Endothelial cell of umbilical vein (primary cell): ENCODE measurements at regions of chr1 and their contacts with region 1.

Region 1: DNA sequence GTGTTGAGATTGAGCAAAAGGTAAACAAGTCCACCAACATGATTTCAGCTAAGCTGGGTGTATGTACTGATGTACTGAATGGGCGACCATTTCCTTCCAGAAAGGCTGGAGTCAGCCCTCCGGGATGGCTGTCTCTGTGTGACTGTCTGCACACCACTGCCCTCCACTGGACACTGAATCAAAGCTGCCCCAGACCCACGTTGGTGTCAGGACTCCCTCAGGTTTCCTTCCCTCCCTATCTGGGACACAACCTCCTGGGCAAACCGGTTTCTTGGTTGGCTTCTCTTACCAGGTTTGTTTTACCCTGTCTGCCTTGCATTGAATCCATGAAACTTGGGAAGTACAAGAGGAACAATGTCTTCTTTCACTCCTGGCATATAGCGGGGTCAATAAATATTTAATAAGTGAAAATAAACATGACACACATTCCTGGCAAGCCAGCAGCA is 5.3 kb upstream of the SRP9 start:
- DNase-seq: peak; percentile 87
- H3K4me3 ChIP-seq: no peak overlapping the region
- H3K27ac ChIP-seq: no peak overlapping the region
- H3K4me1 ChIP-seq: peaks cover 19% of the 10 kb centered on the region
- H3K27me3 ChIP-seq: no peaks in the 10 kb centered on the region
- CTCF ChIP-seq: peak; percentile 88 to 90
- POLR2A ChIP-seq: no peak

Region 2: GRCh38 chr1:225131869-225132268 is 640.5 kb before region 1 on chr1:
- CTCF ChIA-PET with region 1: no interaction called
- POLR2A ChIA-PET with region 1: no interaction called
- dilution Hi-C with region 1: no loop called
- intact Hi-C with region 1: no loop called
- DNase-seq: no peak
- H3K4me3 ChIP-seq: no peak overlapping the region
- H3K27ac ChIP-seq: no peak overlapping the region
- H3K4me1 ChIP-seq: no peaks in the 10 kb centered on the region
- H3K27me3 ChIP-seq: no peaks in the 10 kb centered on the region
- CTCF ChIP-seq: no peak
- POLR2A ChIP-seq: no peak

Region 3: DNA sequence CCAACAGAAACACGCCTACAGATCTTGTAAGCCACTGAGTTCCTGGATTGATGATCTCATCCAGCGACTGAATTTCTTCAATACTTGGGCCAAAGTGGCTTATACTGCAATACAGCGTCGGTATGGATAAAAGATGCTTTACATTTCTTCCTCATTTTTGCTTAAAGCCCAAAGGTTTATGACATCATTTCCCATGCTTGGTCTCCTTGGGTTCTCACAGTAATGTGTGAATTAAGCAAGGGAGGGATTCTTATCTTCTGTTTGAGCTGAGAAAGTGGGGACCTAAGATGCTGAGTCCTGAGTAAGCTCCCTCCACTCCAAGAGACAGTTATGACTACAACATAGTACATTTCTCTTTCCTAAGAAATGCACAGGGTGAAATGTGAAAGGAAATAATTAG is 384.0 kb before region 1 on chr1:
- CTCF ChIA-PET with region 1: no interaction called
- POLR2A ChIA-PET with region 1: no interaction called
- dilution Hi-C with region 1: no loop called
- intact Hi-C with region 1: no loop called
- DNase-seq: no peak
- H3K4me3 ChIP-seq: no peak overlapping the region
- H3K27ac ChIP-seq: no peak overlapping the region
- H3K4me1 ChIP-seq: no peaks in the 10 kb centered on the region
- H3K27me3 ChIP-seq: no peaks in the 10 kb centered on the region
- CTCF ChIP-seq: no peak
- POLR2A ChIP-seq: no peak

Region 4: DNA sequence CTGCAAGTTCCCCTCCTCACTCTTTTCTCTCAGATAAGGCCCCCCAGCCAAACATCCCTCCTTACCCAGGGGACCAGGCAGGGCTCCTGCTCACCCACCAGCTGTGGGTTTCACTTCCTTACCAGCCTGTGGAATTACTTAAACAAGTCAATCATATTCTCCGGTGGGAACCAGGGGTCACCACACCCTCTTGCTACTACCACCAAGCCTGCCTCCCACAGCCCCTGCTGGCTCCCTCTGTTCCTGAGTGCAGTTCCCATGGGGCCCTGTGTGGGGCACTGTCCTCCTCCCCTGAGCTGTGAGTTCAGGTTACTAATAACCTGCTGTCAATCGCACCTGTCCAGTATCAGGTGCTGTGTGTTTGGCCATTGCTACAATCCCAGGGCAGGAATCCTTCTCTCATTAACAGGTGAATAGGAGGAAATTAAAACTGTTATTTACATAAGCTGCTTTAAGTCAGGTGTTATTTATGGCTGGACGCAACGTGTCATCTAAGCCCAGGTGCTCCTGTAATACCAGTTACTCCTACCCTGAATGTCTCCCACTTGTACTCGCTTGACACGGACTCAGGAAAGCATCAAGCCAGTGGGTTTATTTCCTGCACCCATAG is 291.4 kb before region 1 on chr1:
- CTCF ChIA-PET with region 1: interaction called, 81 read pairs
- POLR2A ChIA-PET with region 1: interaction called, 3 read pairs
- dilution Hi-C with region 1: no loop called
- intact Hi-C with region 1: loop called (anchors 1 kb)
- DNase-seq: peak; percentile 54
- H3K4me3 ChIP-seq: no peak overlapping the region
- H3K27ac ChIP-seq: no peak overlapping the region
- H3K4me1 ChIP-seq: no peaks in the 10 kb centered on the region
- H3K27me3 ChIP-seq: no peaks in the 10 kb centered on the region
- CTCF ChIP-seq: peak; percentile 86
- POLR2A ChIP-seq: no peak

Region 5: DNA sequence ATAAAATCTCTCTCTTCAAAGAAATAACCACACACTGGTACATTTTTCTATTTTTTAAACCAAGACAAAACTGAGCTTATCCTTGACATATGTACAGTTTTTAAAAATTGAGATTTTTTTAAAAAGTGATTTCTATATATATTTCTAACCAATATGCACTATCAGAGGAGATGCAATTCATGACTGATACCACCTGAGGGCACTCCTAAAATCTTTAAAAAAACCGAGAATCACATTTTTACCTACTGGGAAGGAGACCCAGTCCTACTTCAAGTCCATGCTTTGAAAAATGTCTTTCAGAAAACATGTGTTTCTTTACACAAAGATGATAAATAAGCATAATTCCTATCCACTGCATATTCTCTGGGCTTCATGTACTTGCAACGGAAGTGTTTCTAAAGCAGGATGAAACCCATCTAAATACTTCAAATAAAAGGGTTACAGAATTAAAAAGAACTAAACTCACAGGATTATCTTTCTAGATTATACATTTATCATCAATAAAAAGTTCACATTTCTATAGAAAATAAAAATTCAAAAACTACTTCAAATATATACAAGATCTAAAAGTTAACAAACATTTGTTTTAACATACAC is 218.0 kb before region 1 on chr1:
- CTCF ChIA-PET with region 1: interaction called, 38 read pairs
- POLR2A ChIA-PET with region 1: interaction called, 3 read pairs
- dilution Hi-C with region 1: no loop called
- intact Hi-C with region 1: loop called (anchors 1 kb)
- DNase-seq: peak; percentile 57
- H3K4me3 ChIP-seq: no peak overlapping the region
- H3K27ac ChIP-seq: no peak overlapping the region
- H3K4me1 ChIP-seq: no peaks in the 10 kb centered on the region
- H3K27me3 ChIP-seq: no peaks in the 10 kb centered on the region
- CTCF ChIP-seq: peak; percentile 30 to 32
- POLR2A ChIP-seq: no peak

Region 6: GRCh38 chr1:225631021-225631663 is 141.2 kb before region 1 on chr1:
- CTCF ChIA-PET with region 1: interaction called, 12 read pairs
- POLR2A ChIA-PET with region 1: no interaction called
- dilution Hi-C with region 1: no loop called
- intact Hi-C with region 1: no loop called
- DNase-seq: no peak
- H3K4me3 ChIP-seq: no peak overlapping the region
- H3K27ac ChIP-seq: no peak overlapping the region
- H3K4me1 ChIP-seq: no peaks in the 10 kb centered on the region
- H3K27me3 ChIP-seq: no peaks in the 10 kb centered on the region
- CTCF ChIP-seq: no peak
- POLR2A ChIP-seq: no peak

Region 7: GRCh38 chr1:225746361-225747179 is 25.8 kb before region 1 on chr1:
- CTCF ChIA-PET with region 1: interaction called, 18 read pairs
- POLR2A ChIA-PET with region 1: interaction called, 3 read pairs
- dilution Hi-C with region 1: no loop called
- intact Hi-C with region 1: no loop called
- DNase-seq: peak; percentile 87
- H3K4me3 ChIP-seq: peak overlapping the region; percentile 34 to 70 (median 60)
- H3K27ac ChIP-seq: peak overlapping the region; percentile 74
- H3K4me1 ChIP-seq: peaks cover 7% of the 10 kb centered on the region
- H3K27me3 ChIP-seq: no peaks in the 10 kb centered on the region
- CTCF ChIP-seq: peak in 1 of 2 donors; percentile 22
- POLR2A ChIP-seq: peak; percentile 45

Region 8: DNA sequence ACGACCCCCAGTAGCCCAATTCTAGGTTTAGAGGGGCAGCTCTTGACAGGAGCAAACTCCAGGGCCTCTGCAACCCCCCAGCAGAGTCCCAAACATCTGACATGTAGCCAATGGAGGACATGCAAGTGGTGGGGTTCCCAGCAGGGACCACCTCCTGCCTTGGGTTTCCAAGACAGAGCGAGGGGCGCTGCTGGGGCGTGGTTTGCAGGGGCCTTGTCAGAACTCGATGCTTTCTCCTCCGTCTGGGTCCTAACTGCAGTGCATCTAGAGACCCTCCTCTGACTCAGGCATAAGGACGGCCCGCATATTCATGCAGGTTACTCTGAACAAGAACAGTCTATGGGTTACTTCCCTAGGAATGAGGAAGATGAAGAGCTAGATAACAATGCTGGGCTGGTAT is 54.7 kb after region 1 on chr1:
- CTCF ChIA-PET with region 1: no interaction called
- POLR2A ChIA-PET with region 1: no interaction called
- dilution Hi-C with region 1: no loop called
- intact Hi-C with region 1: no loop called
- DNase-seq: no peak
- H3K4me3 ChIP-seq: no peak overlapping the region
- H3K27ac ChIP-seq: no peak overlapping the region
- H3K4me1 ChIP-seq: no peaks in the 10 kb centered on the region
- H3K27me3 ChIP-seq: no peaks in the 10 kb centered on the region
- CTCF ChIP-seq: no peak
- POLR2A ChIP-seq: no peak

Region 9: DNA sequence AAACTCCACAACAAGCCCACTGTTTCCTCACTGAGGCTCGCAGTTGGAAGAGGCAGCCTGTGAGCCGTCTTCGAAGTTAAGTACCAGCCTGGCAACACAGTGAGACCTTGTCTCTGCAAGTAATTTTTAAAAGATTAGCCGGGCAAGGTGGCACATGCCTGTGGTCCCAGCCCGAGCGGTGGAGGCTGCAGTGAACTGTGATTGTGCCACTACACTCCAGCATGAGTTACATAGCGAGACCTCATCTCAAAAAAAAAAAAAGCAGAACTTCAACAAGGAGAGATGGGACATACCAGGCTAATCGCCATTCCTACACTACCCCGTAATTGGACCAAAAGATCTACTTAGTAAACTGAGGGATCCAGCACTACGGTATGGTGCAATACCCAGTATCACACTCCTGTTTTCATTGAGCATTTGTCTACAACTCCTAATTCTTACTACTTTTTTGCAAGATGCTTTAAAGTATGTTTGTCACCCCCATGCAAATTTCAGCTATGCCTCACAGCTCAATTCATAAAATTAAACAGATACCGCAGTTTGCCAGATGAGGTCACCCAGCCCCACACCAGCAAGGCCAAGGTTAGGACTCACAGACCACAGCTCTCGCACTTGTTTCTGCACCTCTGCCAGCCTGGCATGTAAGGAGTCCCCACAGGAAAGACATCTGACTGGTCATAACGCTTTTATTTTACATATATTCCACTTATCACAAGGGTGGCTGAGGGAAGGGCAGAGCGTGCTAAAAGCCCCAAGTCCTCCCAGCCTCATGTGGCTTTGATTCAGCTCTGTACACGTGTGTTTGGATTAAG is 205.8 kb after region 1 on chr1:
- CTCF ChIA-PET with region 1: interaction called, 9 read pairs
- POLR2A ChIA-PET with region 1: no interaction called
- dilution Hi-C with region 1: no loop called
- intact Hi-C with region 1: loop called (anchors 1 kb)
- DNase-seq: no peak
- H3K4me3 ChIP-seq: no peak overlapping the region
- H3K27ac ChIP-seq: no peak overlapping the region
- H3K4me1 ChIP-seq: no peaks in the 10 kb centered on the region
- H3K27me3 ChIP-seq: no peaks in the 10 kb centered on the region
- CTCF ChIP-seq: no peak
- POLR2A ChIP-seq: no peak

Region 10: GRCh38 chr1:226004396-226004795 is 232.1 kb after region 1 on chr1:
- CTCF ChIA-PET with region 1: no interaction called
- POLR2A ChIA-PET with region 1: no interaction called
- dilution Hi-C with region 1: no loop called
- intact Hi-C with region 1: no loop called
- DNase-seq: no peak
- H3K4me3 ChIP-seq: no peak overlapping the region
- H3K27ac ChIP-seq: no peak overlapping the region
- H3K4me1 ChIP-seq: peaks cover 27% of the 10 kb centered on the region
- H3K27me3 ChIP-seq: no peaks in the 10 kb centered on the region
- CTCF ChIP-seq: no peak
- POLR2A ChIP-seq: no peak